ENCODE measurements at regions of chr2 and their contacts with region 1.

Region 1: DNA sequence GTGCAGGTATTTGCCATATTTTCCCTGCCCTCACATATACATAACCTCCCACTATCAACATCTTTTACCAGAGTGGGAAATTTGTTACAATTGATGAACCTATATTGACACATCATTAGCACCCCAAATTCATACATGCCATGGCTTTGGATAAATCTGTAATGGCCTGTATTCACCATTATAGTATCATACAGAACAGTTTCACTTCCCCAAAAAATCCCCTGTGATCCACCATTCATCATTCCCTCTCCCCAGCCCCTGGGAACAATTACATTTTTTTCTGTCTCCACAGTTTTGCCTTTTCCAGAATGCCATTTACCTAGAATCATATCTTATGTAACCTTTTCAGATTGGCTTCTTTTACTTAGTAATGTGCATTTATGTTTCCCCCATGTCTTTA is 494.5 kb downstream of the RNF144A start:
- DNase-seq: peak; percentile 39
- H3K4me3 ChIP-seq: no peak overlapping the region
- H3K27ac ChIP-seq: no peak overlapping the region
- H3K4me1 ChIP-seq: no peaks in the 10 kb centered on the region
- H3K27me3 ChIP-seq: no peaks in the 10 kb centered on the region
- CTCF ChIP-seq: no peak
- EP300 ChIP-seq: no peak
- POLR2A ChIP-seq: no peak

Region 2: GRCh38 chr2:8193686-8194615 is 782.3 kb after region 1 on chr2:
- intact Hi-C with region 1: no loop called
- DNase-seq: no peak
- H3K4me3 ChIP-seq: peak overlapping the region in 1 of 4 donors; percentile 16
- H3K27ac ChIP-seq: no peak overlapping the region
- H3K4me1 ChIP-seq: peaks cover 0 to 11% (median 9%) of the 10 kb centered on the region in 4 donors
- H3K27me3 ChIP-seq: no peaks in the 10 kb centered on the region
- CTCF ChIP-seq: no peak
- EP300 ChIP-seq: no peak
- POLR2A ChIP-seq: no peak

Region 3: DNA sequence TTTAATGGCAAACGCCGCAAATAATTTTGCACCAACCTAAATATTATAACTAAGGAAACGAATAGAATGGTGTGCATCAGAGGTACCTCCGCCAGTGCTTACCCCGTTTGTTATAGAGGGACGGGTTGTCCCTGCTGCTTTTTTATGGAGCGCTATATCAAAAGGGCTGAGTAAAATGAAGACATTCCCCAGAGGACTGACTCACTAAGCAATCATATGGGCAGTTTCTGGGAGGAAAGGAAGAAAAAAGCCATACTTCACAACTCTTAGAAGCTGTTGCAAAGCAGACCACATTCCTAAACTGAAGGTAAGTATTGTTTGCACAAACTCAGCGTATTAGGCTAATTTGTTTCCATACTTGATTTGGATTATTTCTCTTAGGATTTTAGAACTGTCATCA is 1283.0 kb after region 1 on chr2:
- intact Hi-C with region 1: loop called (anchors 5 kb)
- DNase-seq: no peak
- H3K4me3 ChIP-seq: no peak overlapping the region
- H3K27ac ChIP-seq: no peak overlapping the region
- H3K4me1 ChIP-seq: peaks cover 7 to 10% (median 8%) of the 10 kb centered on the region in 4 donors
- H3K27me3 ChIP-seq: peaks cover 0 to 10% (median 3%) of the 10 kb centered on the region in 4 donors
- CTCF ChIP-seq: no peak
- EP300 ChIP-seq: no peak
- POLR2A ChIP-seq: no peak

Measured in esophagus muscularis mucosa (tissue), 4 donors.